Mucosa of descending colon (tissue), 3 donors: ENCODE measurements at regions of chr1 and their contacts with region 1.

Region 1: GRCh38 chr1:20151906-20152598 is 12.9 kb downstream of the PLA2G2F start:
- DNase-seq: peak; percentile 84 to 90 (median 86)
- ATAC-seq: peak; percentile 97
- H3K4me3 ChIP-seq: no peak overlapping the region
- H3K4me1 ChIP-seq: peaks cover 7% of the 10 kb centered on the region
- CTCF ChIP-seq: peak; percentile 88

Region 2: DNA sequence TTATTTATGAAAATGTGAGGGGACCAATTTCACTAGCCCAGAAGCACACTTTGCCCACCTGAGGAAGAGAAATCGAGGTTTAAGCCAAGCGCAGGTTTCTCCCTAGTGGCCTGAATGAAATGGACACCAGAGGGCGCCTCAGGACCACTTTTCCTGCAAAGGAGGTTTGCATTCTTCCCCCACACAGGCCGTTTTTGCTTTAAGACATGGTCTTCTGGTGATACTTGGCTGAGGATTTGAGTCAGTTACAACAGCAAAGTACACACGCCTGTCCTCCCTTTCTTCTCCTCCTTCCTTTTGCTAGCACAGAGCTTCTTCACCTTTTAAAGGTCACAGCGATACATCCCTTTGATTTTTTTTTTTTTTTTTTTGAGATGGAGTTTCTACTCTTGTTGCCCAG is 234.0 kb before region 1 on chr1:
- intact Hi-C with region 1: loop called (anchors 2 to 10 kb)
- DNase-seq: peak in 2 of 3 donors; percentile 78 to 95
- ATAC-seq: peak; percentile 48
- H3K4me3 ChIP-seq: no peak overlapping the region
- H3K4me1 ChIP-seq: no peaks in the 10 kb centered on the region
- CTCF ChIP-seq: peak; percentile 67

Region 3: GRCh38 chr1:19974822-19975416 is 177.1 kb before region 1 on chr1:
- intact Hi-C with region 1: loop called in 1 of 2 experiments (anchors 10 kb)
- DNase-seq: peak in 2 of 3 donors; percentile 65 to 68
- ATAC-seq: peak; percentile 80
- H3K4me3 ChIP-seq: no peak overlapping the region
- H3K4me1 ChIP-seq: peaks cover 17% of the 10 kb centered on the region
- CTCF ChIP-seq: peak; percentile 74

Region 4: GRCh38 chr1:20037877-20038276 is 114.2 kb before region 1 on chr1:
- intact Hi-C with region 1: no loop called
- DNase-seq: no peak
- ATAC-seq: no peak
- H3K4me3 ChIP-seq: no peak overlapping the region
- H3K4me1 ChIP-seq: no peaks in the 10 kb centered on the region
- CTCF ChIP-seq: no peak

Region 5: GRCh38 chr1:20100632-20101355 is 51.3 kb before region 1 on chr1:
- intact Hi-C with region 1: loop called in 1 of 2 experiments (anchors 5 kb)
- DNase-seq: peak in 2 of 3 donors; percentile 47 to 55
- ATAC-seq: peak; percentile 89
- H3K4me3 ChIP-seq: no peak overlapping the region
- H3K4me1 ChIP-seq: no peaks in the 10 kb centered on the region
- CTCF ChIP-seq: peak; percentile 56

Region 6: DNA sequence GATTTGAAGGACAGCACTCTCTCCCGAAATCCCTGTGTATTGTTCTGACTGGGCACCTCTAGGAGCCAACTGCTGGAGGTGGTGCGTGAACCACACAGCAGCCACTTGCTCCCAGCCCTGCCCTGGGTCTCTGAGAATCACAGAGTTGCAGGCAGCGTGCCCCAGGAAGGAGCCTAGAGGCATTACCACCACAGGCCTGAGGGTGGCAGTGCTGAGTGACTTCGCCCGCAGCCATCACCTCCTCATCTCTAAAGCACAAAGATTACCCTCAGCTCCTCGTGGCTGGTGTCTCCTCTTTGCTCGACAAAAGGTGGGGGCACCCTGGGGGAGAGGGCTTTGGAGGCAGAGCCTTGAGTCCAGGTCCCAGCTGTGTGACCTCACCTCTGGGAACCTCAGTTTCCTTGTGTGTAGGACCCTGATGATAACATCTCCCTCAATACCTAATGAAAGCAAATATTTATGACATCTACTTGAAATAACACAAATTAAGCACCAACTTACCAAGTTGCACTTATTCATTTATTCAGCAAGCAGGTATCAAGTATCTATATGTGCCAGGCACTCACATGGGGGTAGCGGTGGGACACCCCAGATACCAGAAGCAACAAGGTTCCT is 224.9 kb after region 1 on chr1:
- intact Hi-C with region 1: no loop called
- DNase-seq: peak in 2 of 3 donors; percentile 67 to 77
- ATAC-seq: peak; percentile 90
- H3K4me3 ChIP-seq: no peak overlapping the region
- H3K4me1 ChIP-seq: no peaks in the 10 kb centered on the region
- CTCF ChIP-seq: peak; percentile 79